GM10248 (cell line): ENCODE measurements at regions of chr6 and their contacts with region 1.

Region 1: DNA sequence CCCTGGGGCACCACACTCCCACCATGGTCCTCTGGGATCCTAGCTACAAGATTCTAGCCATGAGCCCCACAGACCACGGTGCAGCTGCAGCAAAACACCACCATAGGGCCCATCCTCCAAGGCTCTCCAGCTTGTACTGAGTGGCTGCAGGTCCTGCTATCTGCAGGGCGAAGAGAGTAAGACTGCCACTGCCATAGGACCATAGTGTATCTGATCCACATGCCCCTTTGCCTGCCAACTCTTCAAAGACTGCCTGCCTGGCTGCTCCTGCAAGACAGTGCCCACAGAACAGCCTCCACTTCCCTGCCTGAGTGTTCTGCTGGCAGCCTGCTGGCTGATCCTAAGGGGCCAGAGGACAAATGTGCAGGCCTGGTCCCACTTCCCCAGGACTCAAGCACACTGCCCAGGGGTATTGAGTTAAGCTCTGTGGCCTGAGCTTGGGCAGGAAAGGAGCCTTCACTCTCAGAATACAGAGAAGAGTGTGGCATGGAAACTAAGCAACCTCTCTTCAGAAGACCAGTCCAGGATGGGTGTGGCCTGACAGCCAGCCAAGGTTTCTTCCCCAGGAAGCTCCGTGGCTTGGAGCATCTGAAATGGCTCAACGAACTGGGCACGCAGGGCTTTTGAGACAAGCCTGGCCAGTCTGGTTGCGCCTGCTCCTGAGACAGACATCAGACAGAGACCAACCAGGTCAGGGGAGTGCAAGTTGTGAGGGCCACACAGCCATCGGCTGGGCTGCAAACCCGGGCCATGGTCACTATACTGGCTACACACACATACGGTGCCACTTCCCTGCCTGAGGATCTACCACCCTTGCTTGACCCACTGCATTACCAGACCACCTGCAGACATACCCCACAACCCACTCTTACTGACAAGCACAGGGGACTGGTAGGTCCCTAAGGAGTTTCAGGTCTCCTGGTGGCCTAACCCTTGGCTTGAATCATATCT is 54.5 kb downstream of the RNGTT start:
- DNase-seq: no peak
- CTCF ChIP-seq: no peak

Region 2: DNA sequence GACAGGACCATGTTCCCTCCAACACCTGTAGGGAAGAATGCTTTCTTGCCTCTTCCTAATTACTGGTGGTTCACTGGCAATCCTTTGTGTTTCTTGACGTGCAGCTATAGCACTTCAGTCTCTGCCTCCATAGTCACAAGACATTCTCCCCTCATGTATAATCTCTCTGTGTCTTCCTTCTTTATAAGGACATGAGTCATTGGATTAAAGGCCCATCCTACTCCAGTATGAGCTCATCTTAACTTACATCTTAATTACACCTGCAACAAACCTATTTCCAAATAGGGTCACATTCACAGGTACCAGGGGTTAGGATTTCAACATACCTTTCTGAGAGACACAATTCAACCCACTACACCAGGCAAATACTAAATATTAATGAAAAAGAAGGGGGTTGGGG is 159.0 kb before region 1 on chr6:
- CTCF ChIA-PET with region 1: no interaction called
- POLR2A ChIA-PET with region 1: no interaction called
- DNase-seq: no peak
- CTCF ChIP-seq: no peak

Region 3: DNA sequence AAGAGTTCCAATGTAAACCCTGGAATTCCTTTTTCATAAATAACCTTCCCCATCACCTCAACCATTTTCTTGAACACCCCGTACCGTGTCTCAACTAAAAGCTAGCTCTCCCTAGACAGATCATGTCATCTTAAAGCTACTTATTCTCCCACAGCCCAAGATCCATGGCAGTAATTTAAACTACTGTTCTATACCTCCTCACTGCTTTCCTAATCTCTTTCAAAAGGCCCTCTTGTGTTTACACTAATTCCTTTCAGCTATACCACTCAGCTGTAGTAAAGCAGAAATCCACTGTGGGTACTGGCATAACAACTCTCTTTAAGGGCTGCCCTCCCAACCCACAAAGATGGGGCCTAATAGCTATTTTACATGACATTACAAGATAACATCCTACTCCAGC is 13.0 kb before region 1 on chr6:
- CTCF ChIA-PET with region 1: interaction called, 15 read pairs
- POLR2A ChIA-PET with region 1: no interaction called
- DNase-seq: no peak
- CTCF ChIP-seq: no peak